CD8-positive, alpha-beta memory T cell (primary cell): ENCODE measurements at regions of chr16 and their contacts with region 1.

Region 1: GRCh38 chr16:56988948-56989945 is at the start of gene NLRC5:
- DNase-seq: peak; percentile 85 to 94 (median 87)
- H3K4me3 ChIP-seq: peak within 1 kb of the TSS; percentile 88
- H3K4me3 Mint-ChIP-seq: peak within 1 kb of the TSS; percentile 98 to 100 (median 99)
- H3K27ac ChIP-seq: peak within 1 kb of the TSS; percentile 81
- H3K27ac Mint-ChIP-seq: peak within 1 kb of the TSS; percentile 94 to 100 (median 98)
- H3K4me1 ChIP-seq: peaks cover 62% of the 10 kb centered on the region
- H3K4me1 Mint-ChIP-seq: peaks cover 68 to 83% (median 74%) of the 10 kb centered on the region in 3 donors
- H3K27me3 ChIP-seq: no peaks in the 10 kb centered on the region
- H3K27me3 Mint-ChIP-seq: no peaks in the 10 kb centered on the region
- total RNA-seq, gene NLRC5: 173 to 178 TPM

Region 2: DNA sequence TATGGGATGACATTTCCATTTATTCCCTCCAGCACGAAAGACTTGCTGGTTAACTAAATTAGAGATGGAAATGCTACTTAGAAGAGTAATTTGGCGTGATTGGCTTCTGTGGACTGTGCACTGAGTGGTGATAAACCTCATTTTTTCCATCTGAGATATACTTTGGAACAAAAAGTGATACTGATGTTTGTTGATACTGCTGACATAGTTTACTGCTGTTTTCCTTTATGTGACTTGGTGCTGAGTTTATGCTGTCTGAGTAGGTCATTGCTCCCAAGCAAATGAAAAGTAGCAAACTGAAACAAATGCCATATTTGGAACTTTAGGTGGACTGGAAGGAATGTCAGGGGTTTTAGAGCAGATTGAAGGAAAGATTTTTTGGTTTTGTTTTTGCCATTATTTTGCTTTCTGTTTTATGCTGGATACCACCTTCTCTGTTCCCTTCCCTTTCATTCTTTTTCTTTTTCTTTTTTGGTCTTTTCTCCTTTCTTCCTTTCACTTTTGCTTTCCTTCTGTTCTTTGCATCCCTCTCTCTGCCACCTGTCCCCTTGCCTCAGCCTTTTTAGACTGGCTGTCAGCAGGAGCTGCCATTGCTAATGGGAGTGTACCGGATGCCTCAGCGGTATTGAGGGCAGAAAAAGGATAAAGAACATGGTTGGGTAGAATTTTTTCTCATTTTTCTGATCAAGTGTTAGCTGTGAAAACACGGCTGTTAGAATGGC is 217.5 kb before region 1 on chr16:
- CTCF ChIA-PET with region 1: no interaction called
- POLR2A ChIA-PET with region 1: no interaction called
- DNase-seq: no peak
- H3K4me3 ChIP-seq: no peak overlapping the region
- H3K4me3 Mint-ChIP-seq: peak overlapping the region in 2 of 7 donors; percentile 23 to 27
- H3K27ac ChIP-seq: no peak overlapping the region
- H3K27ac Mint-ChIP-seq: peak overlapping the region in 3 of 8 donors; percentile 51 to 83 (median 73)
- H3K4me1 ChIP-seq: no peaks in the 10 kb centered on the region
- H3K4me1 Mint-ChIP-seq: peaks cover 24 to 38% (median 37%) of the 10 kb centered on the region in 3 donors
- H3K27me3 ChIP-seq: no peaks in the 10 kb centered on the region
- H3K27me3 Mint-ChIP-seq: no peaks in the 10 kb centered on the region

Region 3: GRCh38 chr16:56931892-56932720 is 57.1 kb before region 1 on chr16 and contains the start of gene HERPUD1:
- CTCF ChIA-PET with region 1: no interaction called
- POLR2A ChIA-PET with region 1: interaction called, 18 read pairs
- DNase-seq: peak; percentile 98 to 99 (median 99)
- H3K4me3 ChIP-seq: peak within 1 kb of the TSS; percentile 69
- H3K4me3 Mint-ChIP-seq: peak within 1 kb of the TSS; percentile 95 to 100 (median 98)
- H3K27ac ChIP-seq: peak within 1 kb of the TSS; percentile 95
- H3K27ac Mint-ChIP-seq: peak within 1 kb of the TSS; percentile 95 to 99 (median 98)
- H3K4me1 ChIP-seq: peaks cover 47% of the 10 kb centered on the region
- H3K4me1 Mint-ChIP-seq: peaks cover 34 to 48% (median 47%) of the 10 kb centered on the region in 3 donors
- H3K27me3 ChIP-seq: no peaks in the 10 kb centered on the region
- H3K27me3 Mint-ChIP-seq: peaks cover 0 to 5% of the 10 kb centered on the region in 2 donors
- total RNA-seq, gene HERPUD1: 162 to 176 TPM

Region 4: DNA sequence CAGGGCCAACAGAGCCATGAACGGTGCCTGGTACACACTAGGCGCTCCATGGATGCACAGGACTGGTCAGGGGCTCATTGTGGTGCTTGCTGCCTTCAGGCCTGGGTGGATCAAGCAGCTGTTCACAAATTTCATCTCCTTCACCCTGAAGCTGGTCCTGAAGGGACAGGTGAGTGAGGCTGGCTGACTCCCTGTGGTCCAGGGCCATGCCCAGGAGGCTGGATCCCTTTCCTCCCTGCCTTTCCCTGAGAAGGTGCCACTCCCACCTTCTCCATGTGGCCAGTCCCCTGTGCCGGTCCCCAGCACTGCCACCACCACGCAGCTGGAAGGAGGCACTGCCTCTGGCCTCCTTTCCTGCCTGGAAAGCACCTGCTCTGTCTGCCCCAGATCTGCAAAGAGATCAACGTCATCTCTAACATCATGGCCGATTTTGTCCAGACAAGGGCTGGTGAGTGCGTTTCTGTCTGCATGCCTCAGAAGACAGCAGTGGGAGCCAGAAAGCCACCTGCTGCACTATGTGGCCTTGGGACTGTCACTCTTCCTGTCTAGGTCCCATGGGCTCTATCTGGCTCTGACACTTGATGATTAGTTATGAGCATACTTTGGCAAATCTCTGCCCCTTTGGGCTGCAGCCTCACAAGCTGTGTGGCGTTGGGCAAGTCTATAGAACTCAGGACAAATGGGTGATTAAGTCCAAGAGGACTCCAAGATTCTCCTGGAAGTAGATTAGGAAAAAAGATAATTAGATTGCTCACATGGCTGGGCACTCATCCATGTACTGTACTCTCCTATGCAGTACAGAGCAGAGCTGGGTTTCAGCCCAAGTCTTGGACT is 18.1 kb before region 1 on chr16:
- CTCF ChIA-PET with region 1: interaction called, 80 read pairs
- POLR2A ChIA-PET with region 1: interaction called, 6 read pairs
- DNase-seq: peak in 1 of 5 donors; percentile 14
- H3K4me3 ChIP-seq: no peak overlapping the region
- H3K4me3 Mint-ChIP-seq: no peak overlapping the region
- H3K27ac ChIP-seq: no peak overlapping the region
- H3K27ac Mint-ChIP-seq: peak overlapping the region in 5 of 8 donors; percentile 34 to 85 (median 72)
- H3K4me1 ChIP-seq: peaks cover 29% of the 10 kb centered on the region
- H3K4me1 Mint-ChIP-seq: peaks cover 32 to 46% (median 45%) of the 10 kb centered on the region in 3 donors
- H3K27me3 ChIP-seq: no peaks in the 10 kb centered on the region
- H3K27me3 Mint-ChIP-seq: peaks cover 0 to 4% of the 10 kb centered on the region in 2 donors

Region 5: DNA sequence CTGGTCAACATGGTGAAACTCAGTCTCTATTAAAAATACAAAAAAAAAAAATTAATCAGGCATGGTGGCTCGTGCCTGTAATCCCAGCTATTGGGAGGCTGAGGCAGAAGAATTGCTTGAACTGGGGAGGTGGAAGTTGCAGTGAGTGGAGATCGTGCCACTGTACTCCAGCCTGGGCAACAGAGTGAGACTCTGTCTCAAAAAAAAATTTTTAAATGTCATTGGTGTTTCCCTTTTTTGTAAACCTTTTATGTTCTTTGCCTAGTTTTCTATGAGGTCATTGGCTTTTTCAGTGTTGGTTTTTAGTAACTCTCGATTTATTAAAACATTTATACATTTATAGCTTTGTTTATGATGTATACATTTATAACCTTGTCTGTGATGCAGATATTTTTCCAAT is 18.3 kb after region 1 on chr16:
- CTCF ChIA-PET with region 1: interaction called, 19 read pairs
- POLR2A ChIA-PET with region 1: interaction called, 22 read pairs
- DNase-seq: no peak
- H3K4me3 ChIP-seq: no peak overlapping the region
- H3K4me3 Mint-ChIP-seq: peak overlapping the region in 6 of 7 donors; percentile 26 to 74 (median 56)
- H3K27ac ChIP-seq: no peak overlapping the region
- H3K27ac Mint-ChIP-seq: peak overlapping the region in 7 of 8 donors; percentile 66 to 98 (median 88)
- H3K4me1 ChIP-seq: peaks cover 98% of the 10 kb centered on the region
- H3K4me1 Mint-ChIP-seq: peaks cover 78 to 93% (median 90%) of the 10 kb centered on the region in 3 donors
- H3K27me3 ChIP-seq: no peaks in the 10 kb centered on the region
- H3K27me3 Mint-ChIP-seq: no peaks in the 10 kb centered on the region

Region 6: DNA sequence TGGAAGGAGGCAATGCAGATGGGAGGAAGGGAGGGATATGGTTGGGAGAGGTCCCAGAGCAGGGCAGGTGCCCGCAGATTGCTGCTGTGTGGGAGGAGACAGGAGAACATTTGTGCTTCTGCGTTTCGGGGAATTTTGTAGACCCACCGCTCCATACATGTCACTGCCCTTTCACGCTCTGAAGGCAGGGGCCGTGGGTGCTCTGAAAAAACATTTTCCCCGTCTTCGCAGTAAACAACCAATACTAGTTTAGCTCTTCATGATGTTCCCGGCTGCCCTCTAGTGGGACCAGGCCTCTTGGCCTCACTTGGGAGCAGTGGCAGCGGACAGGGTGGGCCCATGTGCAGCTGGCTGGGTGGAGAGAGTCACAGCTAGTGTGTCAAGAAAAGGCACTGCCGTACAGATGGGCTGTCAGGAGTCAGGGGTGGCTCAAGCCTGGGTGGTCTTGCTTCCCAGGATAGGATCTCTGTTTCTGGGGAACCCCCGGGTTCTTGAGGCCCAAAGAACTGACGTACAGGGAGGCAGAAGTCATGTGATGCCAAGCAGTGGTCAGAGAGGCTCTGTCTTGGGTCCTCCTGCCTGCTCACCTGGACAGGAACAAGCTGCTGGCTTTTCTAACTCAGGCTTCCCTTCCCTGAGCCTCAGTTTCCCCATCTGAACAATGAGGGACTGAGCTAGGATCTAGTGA is 56.6 kb after region 1 on chr16:
- CTCF ChIA-PET with region 1: interaction called, 18 read pairs
- POLR2A ChIA-PET with region 1: interaction called, 34 read pairs
- DNase-seq: peak in 3 of 5 donors; percentile 38 to 76 (median 48)
- H3K4me3 ChIP-seq: no peak overlapping the region
- H3K4me3 Mint-ChIP-seq: peak overlapping the region in 4 of 7 donors; percentile 15 to 54 (median 16)
- H3K27ac ChIP-seq: no peak overlapping the region
- H3K27ac Mint-ChIP-seq: peak overlapping the region; percentile 85 to 96 (median 90)
- H3K4me1 ChIP-seq: peaks cover 49% of the 10 kb centered on the region
- H3K4me1 Mint-ChIP-seq: peaks cover 41 to 67% (median 44%) of the 10 kb centered on the region in 3 donors
- H3K27me3 ChIP-seq: no peaks in the 10 kb centered on the region
- H3K27me3 Mint-ChIP-seq: peaks cover 0 to 1% of the 10 kb centered on the region in 2 donors